ENCODE measurements at regions of chr6 and their contacts with region 1.

Region 1: GRCh38 chr6:11270030-11271027 is 37.9 kb upstream of the NEDD9 start:
- DNase-seq: no peak
- ATAC-seq: peak; percentile 39 to 96 (median 84)
- H3K4me3 ChIP-seq: no peak overlapping the region
- H3K27ac ChIP-seq: no peak overlapping the region
- H3K4me1 ChIP-seq: peaks cover 6 to 23% (median 12%) of the 10 kb centered on the region in 9 donors
- H3K27me3 ChIP-seq: no peaks in the 10 kb centered on the region
- CTCF ChIP-seq: no peak

Region 2: DNA sequence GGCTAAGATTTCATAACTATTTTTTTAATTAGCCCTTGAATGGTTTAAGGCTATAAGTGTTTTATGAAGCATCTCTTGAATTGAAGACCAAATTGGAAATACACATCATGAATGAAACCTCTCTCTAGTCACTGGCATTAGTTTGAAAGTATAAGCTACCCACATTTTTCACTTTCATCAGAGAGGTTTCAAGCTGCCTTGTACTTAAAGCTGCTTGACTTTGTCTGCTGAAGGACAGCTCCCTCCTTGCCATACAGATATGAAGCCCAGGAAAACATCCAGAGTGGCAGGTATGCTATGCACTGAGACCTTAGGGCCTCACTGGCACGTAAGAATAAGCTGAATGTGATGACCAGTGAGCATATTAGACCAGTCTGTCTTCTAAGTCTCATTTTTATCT is 288.9 kb before region 1 on chr6:
- intact Hi-C with region 1: no loop called
- DNase-seq: no peak
- ATAC-seq: no peak
- H3K4me3 ChIP-seq: no peak overlapping the region
- H3K27ac ChIP-seq: no peak overlapping the region
- H3K4me1 ChIP-seq: no peaks in the 10 kb centered on the region
- H3K27me3 ChIP-seq: no peaks in the 10 kb centered on the region
- CTCF ChIP-seq: no peak

Region 3: DNA sequence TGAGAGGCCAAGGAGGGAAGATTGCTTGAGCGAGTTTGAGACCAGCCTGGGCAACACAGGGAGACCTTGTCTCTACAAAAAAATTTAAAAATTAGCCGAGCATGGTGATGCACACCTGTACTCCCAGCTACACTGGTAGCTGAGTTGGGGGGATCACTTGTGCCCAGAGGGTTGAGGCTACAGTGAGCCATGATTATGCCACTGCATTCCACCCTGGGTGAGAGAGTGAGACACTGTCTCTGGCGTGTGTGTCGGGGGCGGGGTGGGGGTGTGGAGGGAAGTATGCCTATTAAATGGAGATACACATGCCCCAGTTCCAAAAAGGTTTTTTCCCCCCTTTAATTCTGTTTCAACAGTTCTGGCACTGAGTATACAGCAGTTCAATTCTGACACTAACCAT is 1834.8 kb after region 1 on chr6:
- intact Hi-C with region 1: loop called in 1 of 10 experiments (anchors 5 kb)
- DNase-seq: no peak
- ATAC-seq: peak in 2 of 8 donors; percentile 24 to 62
- H3K4me3 ChIP-seq: no peak overlapping the region
- H3K27ac ChIP-seq: no peak overlapping the region
- H3K4me1 ChIP-seq: peaks cover 0 to 23% (median 4%) of the 10 kb centered on the region in 9 donors
- H3K27me3 ChIP-seq: no peaks in the 10 kb centered on the region
- CTCF ChIP-seq: no peak